Caco-2 (cell line): ENCODE measurements at regions of chr10 and their contacts with region 1.

Region 1: DNA sequence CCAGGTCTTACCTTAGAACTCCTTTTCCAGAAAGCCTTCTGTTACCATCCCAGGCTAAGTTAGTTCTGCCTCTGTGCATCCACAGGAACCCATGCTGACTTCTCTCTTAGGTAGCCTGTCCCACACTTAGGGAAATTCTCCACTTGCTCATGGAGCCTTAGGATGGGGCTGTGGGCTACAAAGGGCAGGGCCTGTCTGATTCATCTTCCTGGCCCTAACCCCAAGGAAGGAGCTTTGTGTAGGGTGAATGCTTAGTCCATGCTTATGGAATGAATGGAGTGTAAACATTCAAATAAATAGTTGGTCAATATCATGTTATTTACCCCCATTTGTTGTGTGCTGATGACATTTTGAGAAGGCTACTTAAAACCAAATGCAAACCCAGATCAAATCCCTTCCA is 54.7 kb downstream of the EMX2 start:
- DNase-seq: no peak
- H3K4me3 ChIP-seq: no peak overlapping the region
- H3K4me3 Mint-ChIP-seq: no peak overlapping the region
- H3K27ac Mint-ChIP-seq: peak overlapping the region; percentile 61
- H3K4me1 ChIP-seq: peaks cover 31% of the 10 kb centered on the region
- H3K4me1 Mint-ChIP-seq: peaks cover 7% of the 10 kb centered on the region
- H3K27me3 ChIP-seq: no peaks in the 10 kb centered on the region
- H3K27me3 Mint-ChIP-seq: no peaks in the 10 kb centered on the region
- CTCF ChIP-seq: no peak

Region 2: DNA sequence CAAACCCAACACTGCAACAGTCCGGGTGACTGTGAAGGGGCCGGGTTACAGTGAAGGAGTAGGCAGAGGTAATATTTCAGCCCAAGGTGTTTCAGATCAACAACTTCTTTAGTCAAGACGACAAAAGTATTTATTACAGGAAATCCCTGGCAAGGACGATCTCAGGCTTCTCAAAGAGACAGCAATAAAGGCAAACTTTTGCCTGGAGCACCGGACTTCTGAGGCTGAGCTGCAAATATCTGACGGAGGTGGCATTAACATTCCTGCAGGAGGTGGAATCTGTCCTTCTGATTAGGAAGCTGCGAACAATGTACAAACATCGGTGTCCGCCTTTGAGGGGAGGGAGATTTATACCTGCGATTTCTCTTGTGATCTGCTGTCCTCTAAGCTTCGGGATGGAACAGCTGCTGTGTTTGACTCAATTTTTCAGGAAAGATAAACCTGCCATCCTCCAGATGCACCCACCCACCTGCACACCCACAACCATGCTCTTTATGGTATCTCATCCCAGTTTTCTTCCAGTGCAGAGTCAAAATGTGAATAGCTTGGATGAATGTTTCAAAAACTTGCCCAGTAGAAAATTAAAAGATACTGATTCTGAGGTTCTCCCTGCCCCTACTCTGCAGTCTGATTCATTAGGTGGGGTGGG is 22.6 kb before region 1 on chr10:
- CTCF ChIA-PET with region 1: no interaction called
- POLR2A ChIA-PET with region 1: no interaction called
- intact Hi-C with region 1: loop called (anchors 1 kb)
- DNase-seq: peak; percentile 75 to 87
- H3K4me3 ChIP-seq: no peak overlapping the region
- H3K4me3 Mint-ChIP-seq: peak overlapping the region; percentile 42
- H3K27ac Mint-ChIP-seq: peak overlapping the region; percentile 80
- H3K4me1 ChIP-seq: peaks cover 25% of the 10 kb centered on the region
- H3K4me1 Mint-ChIP-seq: peaks cover 37% of the 10 kb centered on the region
- H3K27me3 ChIP-seq: no peaks in the 10 kb centered on the region
- H3K27me3 Mint-ChIP-seq: no peaks in the 10 kb centered on the region
- CTCF ChIP-seq: no peak

Region 3: DNA sequence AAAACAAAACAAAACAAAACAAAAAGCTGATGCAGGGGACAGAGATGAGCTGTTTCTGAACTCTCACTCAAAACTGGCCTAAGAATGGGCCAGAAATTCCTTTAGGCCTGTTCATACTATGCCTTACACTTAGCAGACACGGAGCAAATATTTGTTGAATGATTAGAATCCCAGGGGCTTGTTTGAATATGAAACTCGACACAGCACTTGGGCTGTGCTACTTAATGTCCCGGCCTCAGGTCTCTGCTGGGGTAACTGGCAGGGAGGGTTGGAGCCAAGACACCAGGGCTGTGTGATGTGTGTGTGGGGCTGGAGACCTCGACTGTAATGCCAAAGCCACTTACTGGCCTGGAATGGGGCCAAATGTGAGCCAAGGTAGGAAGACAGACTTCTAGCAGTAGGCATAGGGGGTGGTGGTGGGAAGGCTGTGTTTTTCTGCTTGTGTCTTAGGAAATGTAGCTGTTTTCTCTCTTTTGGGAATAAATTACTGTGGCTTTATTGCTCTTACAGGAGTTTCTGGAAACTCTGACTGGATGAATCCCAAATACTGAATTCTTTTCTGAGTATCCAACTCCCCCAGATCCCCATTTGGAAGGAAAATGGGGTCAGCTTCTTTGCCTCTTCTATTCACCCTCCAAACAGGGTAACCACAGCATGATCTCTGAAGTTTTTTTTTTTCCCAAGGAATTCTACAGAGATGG is 12.0 kb after region 1 on chr10:
- CTCF ChIA-PET with region 1: no interaction called
- POLR2A ChIA-PET with region 1: interaction called, 3 read pairs
- intact Hi-C with region 1: loop called (anchors 1 kb)
- DNase-seq: peak; percentile 71 to 75
- H3K4me3 ChIP-seq: no peak overlapping the region
- H3K4me3 Mint-ChIP-seq: peak overlapping the region; percentile 45
- H3K27ac Mint-ChIP-seq: peak overlapping the region; percentile 84
- H3K4me1 ChIP-seq: peaks cover 30% of the 10 kb centered on the region
- H3K4me1 Mint-ChIP-seq: peaks cover 36% of the 10 kb centered on the region
- H3K27me3 ChIP-seq: no peaks in the 10 kb centered on the region
- H3K27me3 Mint-ChIP-seq: no peaks in the 10 kb centered on the region
- CTCF ChIP-seq: no peak

Region 4: DNA sequence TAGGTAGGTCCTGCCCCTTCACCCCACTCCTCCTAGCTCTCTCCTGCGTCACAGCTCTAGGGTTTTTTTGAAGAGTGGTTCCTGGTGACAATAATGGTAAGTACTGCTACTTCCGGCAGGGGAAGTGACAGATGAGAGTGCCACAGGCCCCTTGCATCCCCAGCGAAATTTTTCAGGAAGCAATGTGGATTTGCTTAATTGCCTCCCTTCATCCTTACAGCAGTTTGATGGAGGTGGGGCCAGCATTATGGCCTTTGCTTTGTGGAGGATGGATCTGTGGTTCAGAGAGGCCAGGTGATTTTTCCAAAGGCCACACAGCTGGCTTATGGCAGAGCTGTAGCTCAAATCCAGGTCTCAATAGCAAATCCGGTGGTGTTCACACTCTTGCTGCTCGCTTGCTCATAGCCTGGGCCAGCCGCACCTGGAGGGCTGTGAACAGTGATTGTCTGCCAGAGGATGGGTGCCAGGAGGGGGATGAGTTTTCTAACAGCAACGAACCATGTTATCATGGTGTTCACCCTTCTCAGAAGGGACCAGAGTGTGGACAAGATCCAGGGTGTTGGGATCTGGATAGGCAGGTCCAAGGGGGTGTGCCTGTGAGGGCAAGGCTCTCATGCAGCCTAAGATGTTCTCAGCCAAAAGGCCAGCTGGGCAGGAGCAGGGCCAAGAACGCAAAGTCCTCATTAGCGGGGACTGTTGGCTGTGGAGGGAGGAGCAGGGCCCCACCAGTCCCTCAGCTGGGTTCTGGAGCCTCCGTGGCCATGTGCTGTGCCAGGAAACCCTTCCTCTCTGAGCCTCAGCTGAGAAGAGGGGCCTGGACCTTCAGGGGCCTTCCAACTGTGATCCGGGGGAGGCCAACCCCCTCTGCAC is 34.3 kb after region 1 on chr10:
- CTCF ChIA-PET with region 1: no interaction called
- POLR2A ChIA-PET with region 1: no interaction called
- intact Hi-C with region 1: loop called (anchors 1 kb)
- DNase-seq: no peak
- H3K4me3 ChIP-seq: no peak overlapping the region
- H3K4me3 Mint-ChIP-seq: no peak overlapping the region
- H3K27ac Mint-ChIP-seq: no peak overlapping the region
- H3K4me1 ChIP-seq: no peaks in the 10 kb centered on the region
- H3K4me1 Mint-ChIP-seq: no peaks in the 10 kb centered on the region
- H3K27me3 ChIP-seq: no peaks in the 10 kb centered on the region
- H3K27me3 Mint-ChIP-seq: no peaks in the 10 kb centered on the region
- CTCF ChIP-seq: no peak